ENCODE measurements at regions of chr5 and their contacts with region 1.

Region 1: GRCh38 chr5:143290125-143290524 is 113.4 kb downstream of the NR3C1 start:
- DNase-seq: no peak
- H3K4me3 ChIP-seq: no peak overlapping the region
- H3K27ac ChIP-seq: no peak overlapping the region
- H3K4me1 ChIP-seq: no peaks in the 10 kb centered on the region
- H3K27me3 ChIP-seq: no peaks in the 10 kb centered on the region
- CTCF ChIP-seq: no peak

Region 2: GRCh38 chr5:143041972-143042770 is 248.0 kb before region 1 on chr5:
- CTCF ChIA-PET with region 1: interaction called, 18 read pairs
- POLR2A ChIA-PET with region 1: no interaction called
- intact Hi-C with region 1: no loop called
- DNase-seq: no peak
- H3K4me3 ChIP-seq: no peak overlapping the region
- H3K27ac ChIP-seq: no peak overlapping the region
- H3K4me1 ChIP-seq: no peaks in the 10 kb centered on the region
- H3K27me3 ChIP-seq: no peaks in the 10 kb centered on the region
- CTCF ChIP-seq: no peak

Region 3: DNA sequence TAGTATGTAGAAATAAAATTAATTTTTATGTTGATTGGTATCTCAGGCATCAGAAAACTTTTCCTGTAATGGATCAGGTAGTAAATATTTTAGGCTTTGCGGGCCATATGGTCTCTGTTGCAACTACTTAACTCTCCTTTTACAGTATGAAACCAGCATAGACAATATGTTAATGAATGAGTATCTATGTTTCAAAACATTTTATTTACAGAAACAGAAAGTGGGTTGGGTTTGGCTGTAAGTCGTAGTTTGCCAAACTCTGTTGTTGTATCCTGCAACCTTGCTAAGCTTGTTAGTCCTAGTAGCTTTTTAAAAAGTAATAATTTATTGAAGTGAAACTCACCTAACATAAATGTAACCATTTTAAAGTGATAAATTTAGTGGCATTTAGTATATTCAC is 18.7 kb before region 1 on chr5:
- CTCF ChIA-PET with region 1: no interaction called
- POLR2A ChIA-PET with region 1: interaction called, 23 read pairs
- intact Hi-C with region 1: no loop called
- DNase-seq: no peak
- H3K4me3 ChIP-seq: no peak overlapping the region
- H3K27ac ChIP-seq: no peak overlapping the region
- H3K4me1 ChIP-seq: no peaks in the 10 kb centered on the region
- H3K27me3 ChIP-seq: no peaks in the 10 kb centered on the region
- CTCF ChIP-seq: no peak